ENCODE measurements at regions of chr13 and their contacts with region 1.

Region 1: DNA sequence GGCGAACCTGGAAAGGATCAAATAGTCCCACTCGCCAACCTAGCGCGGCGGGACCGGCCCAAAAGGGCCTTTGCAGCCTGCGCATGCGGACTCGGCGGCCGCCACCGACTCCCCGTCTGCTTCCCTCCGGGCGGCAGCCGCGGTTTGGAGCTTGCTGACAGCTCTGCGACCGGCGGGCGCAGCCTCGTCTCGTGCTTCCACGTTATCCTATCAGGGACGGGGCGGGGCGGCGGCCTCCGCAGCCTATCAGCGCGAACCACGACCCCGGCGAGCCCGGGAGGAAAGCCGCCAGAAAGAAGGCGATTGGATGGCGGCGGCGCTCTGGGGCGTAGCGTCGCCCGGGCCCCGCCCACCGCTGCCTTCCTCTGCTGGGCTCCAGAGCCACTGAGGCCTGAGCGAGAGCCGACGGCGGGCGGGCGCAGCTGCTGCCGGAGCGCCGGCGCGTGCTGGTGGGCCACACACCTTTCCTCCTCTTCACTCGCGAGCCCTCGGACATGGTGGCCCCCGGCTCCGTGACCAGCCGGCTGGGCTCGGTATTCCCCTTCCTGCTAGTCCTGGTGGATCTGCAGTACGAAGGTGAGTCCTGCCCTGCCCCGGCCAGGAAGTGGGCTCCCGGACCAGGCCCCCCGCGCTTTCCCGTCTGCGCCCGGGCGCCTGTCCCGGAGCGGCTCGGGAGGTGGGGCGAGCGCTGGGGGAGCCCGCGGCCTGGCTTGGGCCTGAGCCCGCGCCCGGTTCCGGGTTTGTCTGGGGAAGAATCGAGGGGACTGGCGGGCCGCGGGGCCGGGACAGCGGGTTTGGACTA is at the start of gene DNAJC3:
- DNase-seq: peak; percentile 92
- ATAC-seq: peak; percentile 97
- H3K4me3 ChIP-seq: peak within 1 kb of the TSS; percentile 82 to 88 (median 83)
- H3K27ac ChIP-seq: peak within 1 kb of the TSS; percentile 91
- H3K4me1 ChIP-seq: peaks cover 64% of the 10 kb centered on the region
- H3K27me3 ChIP-seq: no peaks in the 10 kb centered on the region; a peak in 1 of 5 replicates
- CTCF ChIP-seq: peak; percentile 5; the same call in 1 of the 2 replicates
- EP300 ChIP-seq: peak in 1 of 2 experiments; percentile 52; a peak in 1 of 4 replicates
- POLR2A ChIP-seq: peak; percentile 90 to 92
- RAD21 ChIP-seq: peak; percentile 53; the same call in 1 of the 2 replicates
- total RNA-seq, gene DNAJC3: 38.1 and 48.2 TPM in 2 replicates

Region 2: GRCh38 chr13:95644601-95645052 is 32.3 kb before region 1 on chr13 and contains the start of gene DZIP1:
- CTCF ChIA-PET with region 1: no interaction called
- POLR2A ChIA-PET with region 1: interaction called, 14 read pairs
- in situ Hi-C with region 1: no loop called
- intact Hi-C with region 1: loop called (anchors 5 kb)
- DNase-seq: peak; percentile 75
- ATAC-seq: peak; percentile 90
- H3K4me3 ChIP-seq: peak within 1 kb of the TSS; percentile 69 to 73 (median 72)
- H3K27ac ChIP-seq: peak within 1 kb of the TSS; percentile 64
- H3K4me1 ChIP-seq: peaks cover 19% of the 10 kb centered on the region
- H3K27me3 ChIP-seq: no peaks in the 10 kb centered on the region
- CTCF ChIP-seq: no peak
- EP300 ChIP-seq: no peak
- POLR2A ChIP-seq: peak; percentile 27 to 57; a peak in 2 of 4 replicates
- RAD21 ChIP-seq: no peak
- total RNA-seq, gene DZIP1: 36.7 and 36.9 TPM in 2 replicates

Region 3: GRCh38 chr13:95784161-95784899 is 107.4 kb after region 1 on chr13:
- CTCF ChIA-PET with region 1: no interaction called
- POLR2A ChIA-PET with region 1: no interaction called
- in situ Hi-C with region 1: no loop called
- intact Hi-C with region 1: loop called (anchors 10 kb)
- DNase-seq: peak; percentile 9
- ATAC-seq: no peak; the same call in 2 of the 3 replicates
- H3K4me3 ChIP-seq: no peak overlapping the region
- H3K27ac ChIP-seq: no peak overlapping the region
- H3K4me1 ChIP-seq: no peaks in the 10 kb centered on the region
- H3K27me3 ChIP-seq: no peaks in the 10 kb centered on the region
- CTCF ChIP-seq: no peak
- EP300 ChIP-seq: no peak
- POLR2A ChIP-seq: no peak
- RAD21 ChIP-seq: no peak

Region 4: GRCh38 chr13:97261254-97262005 is 1584.5 kb after region 1 on chr13:
- CTCF ChIA-PET with region 1: no interaction called
- POLR2A ChIA-PET with region 1: no interaction called
- in situ Hi-C with region 1: no loop called
- intact Hi-C with region 1: no loop called
- DNase-seq: no peak
- ATAC-seq: no peak
- H3K4me3 ChIP-seq: no peak overlapping the region
- H3K27ac ChIP-seq: peak overlapping the region; percentile 92
- H3K4me1 ChIP-seq: peaks cover 82% of the 10 kb centered on the region
- H3K27me3 ChIP-seq: no peaks in the 10 kb centered on the region
- CTCF ChIP-seq: no peak
- EP300 ChIP-seq: no peak
- POLR2A ChIP-seq: no peak
- RAD21 ChIP-seq: no peak

Measured in HepG2 (cell line).